ENCODE measurements at regions of chr3 and their contacts with region 1.

Region 1: DNA sequence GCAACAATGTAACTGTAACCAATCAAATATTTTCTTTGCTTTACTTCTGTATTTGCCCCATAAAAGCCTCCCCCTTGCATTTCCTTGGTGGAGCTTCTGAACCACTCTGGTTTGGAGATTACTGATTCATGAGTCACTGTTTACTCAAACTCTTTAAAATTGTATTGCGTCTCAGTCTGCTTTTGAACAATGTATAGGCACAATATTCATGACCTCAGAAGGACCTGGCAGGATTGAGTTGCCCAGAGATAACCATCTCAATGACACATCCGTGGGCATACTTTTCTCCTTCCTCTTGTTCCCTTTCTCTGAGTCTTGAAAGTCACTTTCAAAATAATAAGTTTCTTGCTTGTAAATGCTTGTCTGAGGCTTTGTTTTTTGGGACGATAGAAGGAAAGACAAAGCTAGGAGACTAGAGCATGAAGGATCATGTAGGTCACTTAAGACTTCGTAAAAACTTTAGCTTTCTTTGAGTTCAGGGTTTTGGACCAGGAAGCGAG is 57.1 kb upstream of the POU1F1 start:
- DNase-seq: no peak
- H3K4me3 Mint-ChIP-seq: no peak overlapping the region
- H3K27ac Mint-ChIP-seq: peak overlapping the region; percentile 88
- H3K4me1 Mint-ChIP-seq: peaks cover 21% of the 10 kb centered on the region
- H3K27me3 Mint-ChIP-seq: no peaks in the 10 kb centered on the region

Region 2: GRCh38 chr3:87272718-87273341 is 60.6 kb before region 1 on chr3:
- intact Hi-C with region 1: loop called (anchors 1 kb)
- DNase-seq: no peak
- H3K4me3 Mint-ChIP-seq: no peak overlapping the region
- H3K27ac Mint-ChIP-seq: no peak overlapping the region
- H3K4me1 Mint-ChIP-seq: peaks cover 43% of the 10 kb centered on the region
- H3K27me3 Mint-ChIP-seq: peaks cover 3% of the 10 kb centered on the region

Region 3: DNA sequence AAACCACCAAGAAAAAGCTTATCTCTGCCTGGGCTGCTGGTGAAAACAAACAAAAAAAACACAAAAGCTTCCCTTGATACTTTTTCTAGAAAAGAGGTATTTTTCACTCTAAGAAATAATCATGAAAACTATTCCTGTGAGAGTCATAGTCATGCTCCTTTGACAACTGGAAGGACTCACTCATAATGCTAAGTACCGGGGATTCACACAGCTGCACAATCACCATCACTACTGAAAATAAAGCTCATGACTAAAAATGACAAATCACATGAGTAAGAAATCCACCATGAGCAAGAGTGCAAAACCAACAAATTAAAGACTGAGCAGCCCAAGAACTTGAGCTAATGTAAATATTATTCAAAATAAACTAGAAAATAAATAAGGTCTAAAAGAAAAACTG is 46.4 kb before region 1 on chr3:
- intact Hi-C with region 1: loop called (anchors 1 kb)
- DNase-seq: no peak
- H3K4me3 Mint-ChIP-seq: no peak overlapping the region
- H3K27ac Mint-ChIP-seq: peak overlapping the region; percentile 43
- H3K4me1 Mint-ChIP-seq: peaks cover 7% of the 10 kb centered on the region
- H3K27me3 Mint-ChIP-seq: peaks cover 15% of the 10 kb centered on the region

Region 4: DNA sequence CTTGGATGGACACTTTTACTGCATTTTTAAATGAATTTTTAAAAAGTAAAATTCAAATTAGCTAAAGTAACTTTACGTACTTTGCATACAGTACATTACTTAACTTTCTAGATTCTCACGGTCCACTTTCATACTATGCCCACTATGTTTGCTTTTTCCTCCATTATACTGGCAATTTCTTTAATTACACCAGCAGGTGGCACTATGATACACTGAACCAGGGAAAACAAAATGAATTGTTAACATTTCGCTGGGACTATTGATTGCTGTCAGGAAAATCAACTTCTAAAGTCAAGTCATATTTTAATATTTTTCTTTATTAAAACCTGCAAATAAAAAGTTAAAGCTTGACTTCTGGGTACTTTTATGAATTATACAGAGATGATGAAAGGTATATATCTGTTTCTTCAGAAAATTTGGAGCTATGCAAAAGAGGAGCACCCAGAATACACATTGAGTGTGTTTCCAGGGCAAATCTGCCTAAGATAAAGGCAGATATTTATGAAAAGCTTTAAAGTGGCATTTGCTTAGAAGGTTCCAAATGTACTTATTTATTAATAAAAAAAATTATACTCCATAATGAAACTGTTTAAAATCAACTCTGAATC is 35.2 kb before region 1 on chr3:
- intact Hi-C with region 1: no loop called
- DNase-seq: no peak
- H3K4me3 Mint-ChIP-seq: no peak overlapping the region
- H3K27ac Mint-ChIP-seq: no peak overlapping the region
- H3K4me1 Mint-ChIP-seq: peaks cover 6% of the 10 kb centered on the region
- H3K27me3 Mint-ChIP-seq: no peaks in the 10 kb centered on the region

Region 5: GRCh38 chr3:87311309-87311708 is 22.1 kb before region 1 on chr3:
- intact Hi-C with region 1: loop called (anchors 1 kb)
- DNase-seq: no peak
- H3K4me3 Mint-ChIP-seq: no peak overlapping the region
- H3K27ac Mint-ChIP-seq: no peak overlapping the region
- H3K4me1 Mint-ChIP-seq: peaks cover 11% of the 10 kb centered on the region
- H3K27me3 Mint-ChIP-seq: peaks cover 2% of the 10 kb centered on the region

Region 6: GRCh38 chr3:88025001-88025552 is 691.6 kb after region 1 on chr3:
- intact Hi-C with region 1: loop called (anchors 10 kb)
- DNase-seq: no peak
- H3K4me3 Mint-ChIP-seq: no peak overlapping the region
- H3K27ac Mint-ChIP-seq: no peak overlapping the region
- H3K4me1 Mint-ChIP-seq: peaks cover 39% of the 10 kb centered on the region
- H3K27me3 Mint-ChIP-seq: no peaks in the 10 kb centered on the region

Region 7: DNA sequence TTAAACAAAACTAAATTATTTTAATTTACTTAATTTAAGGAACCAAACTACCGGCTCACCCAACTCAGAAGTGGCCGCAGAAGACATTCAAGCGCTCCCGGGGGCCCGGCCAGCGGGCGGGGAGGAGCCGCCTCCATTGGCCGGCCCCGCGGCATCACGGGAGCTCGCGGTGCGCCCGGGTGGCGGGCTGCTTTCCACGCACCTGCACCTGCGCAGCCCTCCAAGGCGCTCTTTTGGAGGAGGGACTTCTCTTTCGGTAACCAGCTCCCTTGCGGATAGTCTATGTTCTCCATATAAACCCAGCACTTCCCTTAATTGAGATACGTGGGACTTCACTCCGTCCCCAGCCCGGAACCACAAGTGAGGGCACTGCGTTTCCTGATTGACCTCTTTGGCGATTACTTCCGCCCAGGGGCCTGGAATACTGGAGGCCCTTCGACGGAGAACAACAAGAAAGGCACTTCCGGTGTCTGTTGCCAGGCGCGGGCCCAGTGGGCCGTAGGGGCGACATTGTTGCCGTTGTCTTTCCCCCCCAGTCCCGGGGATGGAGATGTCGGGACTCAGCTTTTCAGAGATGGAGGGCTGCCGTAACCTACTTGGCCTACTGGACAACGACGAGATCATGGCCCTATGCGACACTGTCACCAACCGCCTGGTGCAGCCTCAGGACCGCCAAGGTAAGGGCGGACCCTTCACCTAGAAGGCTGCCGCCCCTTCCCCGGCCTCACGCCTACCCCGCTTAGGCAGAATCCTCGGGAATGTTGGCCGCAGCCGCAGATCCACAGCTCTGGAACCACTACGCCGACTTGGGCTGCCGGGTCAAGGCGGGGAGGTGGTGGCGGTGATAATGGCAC is 816.3 kb after region 1 on chr3 and contains the start of gene C3orf38:
- intact Hi-C with region 1: loop called (anchors 10 kb)
- DNase-seq: peak; percentile 80
- H3K4me3 Mint-ChIP-seq: peak within 1 kb of the TSS; percentile 96
- H3K27ac Mint-ChIP-seq: peak within 1 kb of the TSS; percentile 99
- H3K4me1 Mint-ChIP-seq: peaks cover 27% of the 10 kb centered on the region
- H3K27me3 Mint-ChIP-seq: no peaks in the 10 kb centered on the region
- total RNA-seq, gene C3orf38: 23.1 and 25.4 TPM in 2 replicates

Measured in activated T-helper 2 cell treated with anti-CD3 and anti-CD28 coated beads, Interferon-gamma antibody, Interleukin-2, Interleukin-4, amounts not matched to agents 10 μg/mL and 5 μg/mL and 100 μg/mL, durations not matched to agents 14 hours and 24 hours and 36 hours (primary cell).